ENCODE measurements at regions of chr15 and their contacts with region 1.

Region 1: GRCh38 chr15:66566963-66567531 is 1.2 kb upstream of the LCTL start:
- DNase-seq: no peak
- H3K4me3 ChIP-seq: no peak overlapping the region
- CTCF ChIP-seq: peak; percentile 56

Region 2: DNA sequence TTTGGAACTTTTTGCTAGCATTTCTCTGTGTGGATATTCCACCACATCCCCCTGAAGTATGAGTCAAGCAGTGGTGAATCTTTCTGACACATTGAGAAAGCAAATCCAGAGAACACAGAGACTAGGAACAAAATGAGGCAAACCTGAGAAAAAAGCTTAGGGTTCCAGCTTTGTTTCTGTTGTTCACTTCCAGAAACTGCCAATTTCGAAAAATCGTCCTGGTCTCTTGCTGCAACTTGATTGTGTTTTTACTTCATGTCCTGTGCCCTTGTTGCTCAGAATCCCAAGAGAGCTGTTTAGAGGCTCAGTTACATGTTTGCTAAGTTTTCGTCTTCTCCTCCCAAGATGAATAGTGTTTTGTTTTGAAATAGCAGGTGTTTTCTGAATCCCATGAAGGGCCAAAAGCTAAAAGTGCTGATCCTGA is 166.7 kb before region 1 on chr15:
- CTCF ChIA-PET with region 1: no interaction called
- POLR2A ChIA-PET with region 1: no interaction called
- DNase-seq: no peak
- H3K4me3 ChIP-seq: no peak overlapping the region
- CTCF ChIP-seq: no peak

Region 3: DNA sequence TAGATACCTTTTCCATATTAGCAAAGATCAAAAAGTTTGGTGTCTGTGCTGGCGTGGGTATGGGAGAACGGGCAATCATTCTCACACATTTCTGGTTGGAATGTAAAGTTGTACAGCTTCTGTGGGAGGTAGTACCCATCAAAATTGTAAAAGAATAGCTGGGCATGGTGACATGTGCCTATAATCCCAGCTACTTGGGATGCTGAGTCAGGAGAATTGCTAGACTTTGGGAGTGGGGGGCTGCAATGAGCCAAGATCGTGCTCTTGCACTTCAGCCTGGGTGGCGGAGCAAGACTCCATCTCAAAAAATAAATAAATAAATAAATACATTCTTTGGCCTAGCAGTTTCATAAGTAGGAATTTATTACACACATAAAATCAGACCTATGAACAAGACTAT is 24.2 kb before region 1 on chr15:
- CTCF ChIA-PET with region 1: interaction called, 11 read pairs
- POLR2A ChIA-PET with region 1: no interaction called
- DNase-seq: no peak
- H3K4me3 ChIP-seq: no peak overlapping the region
- CTCF ChIP-seq: no peak

Region 4: GRCh38 chr15:66578286-66578875 is 11.3 kb after region 1 on chr15:
- CTCF ChIA-PET with region 1: interaction called, 88 read pairs
- POLR2A ChIA-PET with region 1: interaction called, 3 read pairs
- DNase-seq: no peak
- H3K4me3 ChIP-seq: no peak overlapping the region
- CTCF ChIP-seq: no peak

Measured in AG04449 (cell line).